ENCODE measurements at regions of chr12 and their contacts with region 1.

Region 1: GRCh38 chr12:47079468-47079980 is at the starts of genes AMIGO2 and PCED1B:
- DNase-seq: peak in 8 of 10 donors; percentile 14 to 72 (median 58)
- H3K4me3 ChIP-seq: peak within 1 kb of the TSS; percentile 47 to 84 (median 66)
- H3K27ac ChIP-seq: peak within 1 kb of the TSS in 52 of 59 donors; percentile 14 to 87 (median 70)
- H3K27me3 ChIP-seq: peaks cover 0 to 15% (median 0%) of the 10 kb centered on the region in 45 donors
- CTCF ChIP-seq: peak in 19 of 56 donors; percentile 7 to 45 (median 14)
- total RNA-seq, gene AMIGO2: 1.2 to 16.6 (median 4.1) TPM
- total RNA-seq, gene PCED1B: 0.43 to 5.7 (median 2.3) TPM

Region 2: DNA sequence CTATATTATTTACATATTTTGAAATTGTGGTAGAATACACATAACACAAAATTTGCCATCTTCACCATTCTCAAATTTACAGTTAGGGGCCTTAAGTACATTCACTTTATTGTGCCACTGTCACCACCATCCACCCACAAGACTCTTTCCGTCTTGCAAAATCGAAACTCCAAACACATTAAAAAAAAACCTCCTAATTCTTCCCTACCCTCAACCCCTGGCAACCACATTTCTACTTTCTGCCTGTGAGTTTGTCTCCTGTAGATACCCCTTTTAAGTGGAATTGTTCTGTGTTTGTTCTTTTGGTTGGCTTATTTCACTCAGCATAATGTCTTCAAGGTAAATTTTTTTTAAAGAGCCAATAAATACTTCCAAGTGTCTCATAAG is 31.9 kb after region 1 on chr12:
- intact Hi-C with region 1: no loop called
- DNase-seq: no peak
- H3K4me3 ChIP-seq: no peak overlapping the region
- H3K27ac ChIP-seq: no peak overlapping the region
- H3K27me3 ChIP-seq: no peaks in the 10 kb centered on the region
- CTCF ChIP-seq: no peak

Region 3: DNA sequence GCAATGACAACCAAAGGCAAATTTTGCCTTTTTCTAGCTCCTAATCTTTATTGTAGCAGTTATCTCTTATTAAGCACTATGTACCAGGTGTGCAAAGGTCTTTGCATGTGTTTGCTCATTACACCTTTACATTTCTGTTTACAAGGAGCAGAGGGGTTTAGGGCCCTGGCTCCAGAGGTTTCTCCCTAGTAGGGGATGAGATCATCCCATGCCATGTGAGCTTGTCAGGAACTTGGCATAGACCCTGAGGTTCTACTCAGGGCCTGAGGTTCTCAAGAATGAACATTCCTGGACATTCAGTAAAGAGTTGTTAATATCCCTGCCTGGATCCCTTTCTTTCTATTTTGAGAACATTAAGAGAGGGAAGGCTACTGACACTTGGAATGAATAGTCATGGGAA is 334.3 kb after region 1 on chr12:
- intact Hi-C with region 1: loop called in 1 of 2 experiments (anchors 5 kb)
- DNase-seq: no peak
- H3K4me3 ChIP-seq: no peak overlapping the region
- H3K27ac ChIP-seq: no peak overlapping the region
- H3K27me3 ChIP-seq: peaks cover 0 to 4% (median 0%) of the 10 kb centered on the region in 45 donors
- CTCF ChIP-seq: no peak